Colonic mucosa (tissue), 4 donors: ENCODE measurements at regions of chr1 and their contacts with region 1.

Region 1: GRCh38 chr1:67005068-67005467 is 48.9 kb downstream of the SLC35D1 start:
- DNase-seq: no peak
- H3K4me3 ChIP-seq: no peak overlapping the region
- H3K27ac ChIP-seq: no peak overlapping the region
- H3K4me1 ChIP-seq: no peaks in the 10 kb centered on the region
- H3K27me3 ChIP-seq: no peaks in the 10 kb centered on the region
- CTCF ChIP-seq: no peak

Region 2: DNA sequence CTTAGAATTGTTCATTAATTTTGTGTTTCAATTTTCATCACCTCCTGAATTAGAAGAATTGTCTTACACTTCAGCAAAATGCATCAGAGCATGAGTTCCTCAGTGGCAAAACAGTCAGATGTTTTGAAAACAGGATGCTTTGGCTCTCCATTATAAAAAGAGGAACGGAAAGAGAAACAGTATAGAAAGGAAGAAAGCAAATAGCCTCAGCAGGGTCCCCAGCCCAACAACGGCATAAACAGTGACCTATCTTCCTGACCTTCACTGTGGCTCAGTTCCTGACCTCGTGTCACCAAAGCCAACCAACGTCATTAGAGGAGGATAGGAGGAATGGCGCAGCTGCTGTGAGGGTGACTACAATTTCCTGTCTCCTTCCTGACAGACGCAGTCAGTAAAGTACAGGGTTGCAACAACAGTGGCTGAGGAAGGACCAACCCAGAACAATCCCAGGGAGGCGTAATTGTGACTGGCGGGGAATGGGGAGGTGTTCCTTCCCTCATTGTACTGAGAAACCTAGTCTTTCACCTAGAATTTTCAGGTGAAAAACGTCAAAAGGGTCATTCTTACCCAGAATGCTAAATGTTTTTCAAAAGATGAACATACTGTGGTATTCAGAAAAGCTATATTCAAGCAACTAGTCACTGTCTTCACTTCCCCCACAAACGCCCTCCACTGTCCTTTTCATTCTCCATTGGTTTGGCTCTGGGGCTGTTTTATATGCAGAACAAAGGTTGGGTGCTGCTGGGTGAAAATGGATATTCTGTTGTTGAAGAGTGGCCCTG is 669.0 kb before region 1 on chr1:
- intact Hi-C with region 1: no loop called
- DNase-seq: peak; percentile 50
- H3K4me3 ChIP-seq: peak overlapping the region; percentile 10
- H3K27ac ChIP-seq: peak overlapping the region; percentile 39
- H3K4me1 ChIP-seq: no peaks in the 10 kb centered on the region
- H3K27me3 ChIP-seq: no peaks in the 10 kb centered on the region
- CTCF ChIP-seq: no peak

Region 3: DNA sequence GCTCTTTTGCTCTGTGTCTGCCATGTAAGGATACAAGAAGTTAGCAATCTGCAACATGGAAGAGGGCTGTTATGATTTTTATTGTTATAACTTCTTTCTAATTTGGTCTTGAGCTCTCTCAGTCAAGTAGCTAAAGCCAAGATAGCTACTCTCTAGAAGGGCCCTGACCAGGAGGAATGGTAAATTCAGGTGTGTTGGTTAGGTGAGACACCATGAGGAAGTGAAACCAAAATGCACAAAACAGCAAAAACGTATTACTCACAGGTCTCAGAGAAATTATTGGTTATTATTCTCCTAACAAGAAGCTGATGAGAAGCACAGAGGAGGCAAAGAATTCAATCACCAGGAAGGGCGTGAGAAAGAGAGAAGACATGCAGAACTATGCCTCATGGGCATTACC is 152.2 kb before region 1 on chr1:
- intact Hi-C with region 1: no loop called
- DNase-seq: no peak
- H3K4me3 ChIP-seq: no peak overlapping the region
- H3K27ac ChIP-seq: no peak overlapping the region
- H3K4me1 ChIP-seq: no peaks in the 10 kb centered on the region
- H3K27me3 ChIP-seq: no peaks in the 10 kb centered on the region
- CTCF ChIP-seq: no peak

Region 4: GRCh38 chr1:67097305-67097704 is 92.2 kb after region 1 on chr1:
- intact Hi-C with region 1: no loop called
- DNase-seq: no peak
- H3K4me3 ChIP-seq: no peak overlapping the region
- H3K27ac ChIP-seq: no peak overlapping the region
- H3K4me1 ChIP-seq: no peaks in the 10 kb centered on the region
- H3K27me3 ChIP-seq: no peaks in the 10 kb centered on the region
- CTCF ChIP-seq: no peak

Region 5: GRCh38 chr1:67214420-67215174 is 209.5 kb after region 1 on chr1:
- intact Hi-C with region 1: loop called (anchors 10 kb)
- DNase-seq: peak; percentile 24
- H3K4me3 ChIP-seq: no peak overlapping the region
- H3K27ac ChIP-seq: no peak overlapping the region
- H3K4me1 ChIP-seq: no peaks in the 10 kb centered on the region
- H3K27me3 ChIP-seq: no peaks in the 10 kb centered on the region
- CTCF ChIP-seq: peak; percentile 33